Cardiac septum (tissue), 1 donor: ENCODE measurements at regions of chr4 and their contacts with region 1.

Region 1: DNA sequence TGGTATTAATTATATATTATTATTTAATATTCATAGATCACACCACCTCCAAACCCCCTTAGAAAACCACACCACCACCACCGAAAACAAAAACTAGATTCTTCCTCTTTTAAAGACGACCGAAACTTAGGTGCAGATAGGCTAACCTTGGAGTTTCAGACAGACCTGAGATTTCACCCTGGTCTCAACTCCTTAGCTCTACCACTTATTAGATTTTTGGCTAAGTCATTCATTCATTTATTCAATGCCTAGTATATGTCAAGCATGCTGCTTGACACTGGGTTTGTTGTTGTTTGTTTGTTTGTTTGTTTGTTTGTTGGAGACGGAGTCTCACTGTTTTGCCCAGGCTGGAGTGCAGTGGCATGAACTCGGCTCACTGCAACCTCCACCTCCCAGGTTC is 9.5 kb upstream of the BMP2K start:
- DNase-seq: no peak

Region 2: GRCh38 chr4:78704981-78705683 is 61.5 kb before region 1 on chr4:
- intact Hi-C with region 1: loop called (anchors 10 kb)
- DNase-seq: no peak

Region 3: GRCh38 chr4:78901882-78902281 is 135.2 kb after region 1 on chr4:
- intact Hi-C with region 1: no loop called
- DNase-seq: no peak